ENCODE measurements at regions of chr7 and their contacts with region 1.

Region 1: DNA sequence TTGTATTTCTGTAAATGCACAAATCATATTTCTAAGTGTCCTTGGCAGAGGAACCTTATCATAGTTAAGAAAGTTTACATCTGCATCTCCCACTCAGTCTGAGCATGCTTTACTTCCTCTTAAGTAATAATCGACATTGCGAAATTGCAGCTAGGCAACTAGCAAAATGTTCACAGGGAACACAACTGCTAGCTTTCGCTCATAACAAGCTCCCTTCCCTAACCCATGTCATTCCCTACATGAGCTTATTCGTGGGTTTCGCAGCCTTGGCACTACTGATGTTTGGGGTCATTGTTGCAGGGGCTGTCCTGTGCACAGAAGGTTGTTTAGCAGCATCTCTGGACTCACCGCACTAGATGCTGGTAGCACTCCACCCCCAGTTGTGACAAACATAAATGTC is 71.6 kb downstream of the AHR start:
- DNase-seq: peak; percentile 94
- H3K4me3 Mint-ChIP-seq: peak overlapping the region; percentile 9
- H3K27ac Mint-ChIP-seq: peak overlapping the region; percentile 89
- H3K4me1 Mint-ChIP-seq: peaks cover 27% of the 10 kb centered on the region
- H3K27me3 Mint-ChIP-seq: no peaks in the 10 kb centered on the region
- CTCF ChIP-seq: no peak

Region 2: GRCh38 chr7:17325364-17325763 is 44.7 kb before region 1 on chr7:
- CTCF ChIA-PET with region 1: no interaction called
- POLR2A ChIA-PET with region 1: no interaction called
- intact Hi-C with region 1: no loop called
- DNase-seq: no peak
- H3K4me3 Mint-ChIP-seq: no peak overlapping the region
- H3K27ac Mint-ChIP-seq: peak overlapping the region; percentile 80
- H3K4me1 Mint-ChIP-seq: peaks cover 15% of the 10 kb centered on the region
- H3K27me3 Mint-ChIP-seq: no peaks in the 10 kb centered on the region
- CTCF ChIP-seq: no peak

Region 3: GRCh38 chr7:17357952-17358351 is 12.1 kb before region 1 on chr7:
- CTCF ChIA-PET with region 1: interaction called, 5 read pairs
- POLR2A ChIA-PET with region 1: interaction called, 13 read pairs
- intact Hi-C with region 1: no loop called
- DNase-seq: no peak
- H3K4me3 Mint-ChIP-seq: no peak overlapping the region
- H3K27ac Mint-ChIP-seq: no peak overlapping the region
- H3K4me1 Mint-ChIP-seq: no peaks in the 10 kb centered on the region
- H3K27me3 Mint-ChIP-seq: no peaks in the 10 kb centered on the region
- CTCF ChIP-seq: no peak

Region 4: GRCh38 chr7:17492437-17492836 is 122.3 kb after region 1 on chr7:
- CTCF ChIA-PET with region 1: interaction called, 6 read pairs
- POLR2A ChIA-PET with region 1: interaction called, 18 read pairs
- intact Hi-C with region 1: no loop called
- DNase-seq: peak; percentile 35
- H3K4me3 Mint-ChIP-seq: no peak overlapping the region
- H3K27ac Mint-ChIP-seq: no peak overlapping the region
- H3K4me1 Mint-ChIP-seq: peaks cover 26% of the 10 kb centered on the region
- H3K27me3 Mint-ChIP-seq: no peaks in the 10 kb centered on the region
- CTCF ChIP-seq: no peak

Region 5: DNA sequence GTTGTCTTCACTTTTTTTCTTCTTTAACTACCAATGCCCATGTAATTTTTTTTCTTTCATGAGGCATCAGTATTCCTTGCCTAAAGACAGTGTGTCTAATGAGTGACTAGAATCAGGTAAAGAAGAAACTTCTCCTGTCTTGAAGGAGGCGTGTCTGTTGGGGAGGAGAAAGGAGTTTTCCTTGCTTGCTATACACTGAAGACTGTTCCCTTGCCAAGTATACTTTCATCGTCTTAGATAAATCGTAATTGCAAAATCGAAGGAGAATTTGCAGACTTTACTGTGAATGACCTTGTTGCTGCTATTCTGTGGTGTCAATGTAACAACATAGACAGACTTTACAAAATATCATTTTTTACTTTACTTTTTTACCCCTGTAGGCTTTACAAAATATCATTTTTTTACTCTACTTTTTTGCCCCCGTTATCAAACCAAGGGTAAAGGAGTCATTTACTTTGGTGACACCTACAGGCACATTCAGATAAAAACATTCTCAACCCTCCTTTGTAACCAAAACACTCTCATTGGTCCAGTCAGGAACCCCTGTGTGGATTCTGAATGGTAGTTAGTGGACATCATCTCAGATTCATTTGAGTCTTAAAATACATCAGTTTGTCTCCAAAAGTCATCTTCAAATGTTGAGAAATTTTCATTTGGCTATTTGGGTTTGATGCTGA is 160.8 kb after region 1 on chr7:
- CTCF ChIA-PET with region 1: interaction called, 3 read pairs
- POLR2A ChIA-PET with region 1: interaction called, 16 read pairs
- intact Hi-C with region 1: no loop called
- DNase-seq: peak; percentile 44
- H3K4me3 Mint-ChIP-seq: no peak overlapping the region
- H3K27ac Mint-ChIP-seq: peak overlapping the region; percentile 52
- H3K4me1 Mint-ChIP-seq: peaks cover 45% of the 10 kb centered on the region
- H3K27me3 Mint-ChIP-seq: no peaks in the 10 kb centered on the region
- CTCF ChIP-seq: peak; percentile 17

Region 6: GRCh38 chr7:17646253-17646956 is 276.3 kb after region 1 on chr7:
- CTCF ChIA-PET with region 1: interaction called, 3 read pairs
- POLR2A ChIA-PET with region 1: interaction called, 6 read pairs
- intact Hi-C with region 1: loop called (anchors 2 kb)
- DNase-seq: peak; percentile 43
- H3K4me3 Mint-ChIP-seq: no peak overlapping the region
- H3K27ac Mint-ChIP-seq: no peak overlapping the region
- H3K4me1 Mint-ChIP-seq: peaks cover 19% of the 10 kb centered on the region
- H3K27me3 Mint-ChIP-seq: no peaks in the 10 kb centered on the region
- CTCF ChIP-seq: peak; percentile 51